ENCODE measurements at regions of chr4 and their contacts with region 1.

Region 1: GRCh38 chr4:139177868-139178611 is 1.0 kb upstream of the ELF2 start:
- DNase-seq: peak; percentile 95
- H3K4me3 Mint-ChIP-seq: peak overlapping the region; percentile 78
- H3K27ac Mint-ChIP-seq: peak overlapping the region; percentile 85
- H3K4me1 Mint-ChIP-seq: peaks cover 21% of the 10 kb centered on the region
- H3K27me3 Mint-ChIP-seq: peaks cover 26% of the 10 kb centered on the region

Region 2: DNA sequence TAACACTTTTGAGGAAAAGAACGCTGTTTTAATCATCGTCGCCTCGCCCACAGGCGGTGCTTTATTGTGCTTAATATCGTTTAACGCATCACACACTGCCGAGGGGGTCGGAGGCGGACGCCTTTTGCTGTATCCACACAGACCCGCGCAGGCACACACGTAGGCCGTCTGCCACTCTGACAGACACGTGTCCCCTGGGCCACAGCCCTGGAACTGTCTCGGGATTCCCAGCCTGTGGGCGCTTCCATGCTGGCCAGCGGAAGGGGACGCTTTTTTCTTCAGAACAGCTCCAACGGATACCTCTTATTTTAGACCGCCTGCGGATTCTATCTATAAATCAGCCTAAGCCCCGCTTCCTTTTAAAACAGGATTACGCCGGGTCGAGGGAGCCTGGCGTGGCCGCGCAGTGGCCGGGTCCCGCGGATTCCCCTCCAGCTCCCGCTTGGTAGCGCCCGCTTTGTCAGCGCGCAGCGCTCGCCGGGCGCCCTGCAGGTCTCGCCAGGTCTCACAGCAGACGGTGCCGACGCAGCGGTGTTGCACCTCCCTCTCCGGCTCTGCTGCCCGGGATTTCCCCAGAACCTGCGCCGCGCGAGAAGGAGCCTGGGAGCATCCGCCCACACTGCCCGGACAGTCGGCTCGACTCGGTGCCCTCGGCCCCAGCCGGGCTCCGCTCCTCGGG is 162.6 kb before region 1 on chr4 and contains the start of gene NOCT:
- CTCF ChIA-PET with region 1: interaction called, 7 read pairs
- POLR2A ChIA-PET with region 1: interaction called, 10 read pairs
- DNase-seq: peak; percentile 91
- H3K4me3 Mint-ChIP-seq: peak within 1 kb of the TSS; percentile 87
- H3K27ac Mint-ChIP-seq: peak within 1 kb of the TSS; percentile 87
- H3K4me1 Mint-ChIP-seq: peaks cover 33% of the 10 kb centered on the region
- H3K27me3 Mint-ChIP-seq: no peaks in the 10 kb centered on the region
- total RNA-seq, gene NOCT: 4.5 to 5.4 TPM

Region 3: DNA sequence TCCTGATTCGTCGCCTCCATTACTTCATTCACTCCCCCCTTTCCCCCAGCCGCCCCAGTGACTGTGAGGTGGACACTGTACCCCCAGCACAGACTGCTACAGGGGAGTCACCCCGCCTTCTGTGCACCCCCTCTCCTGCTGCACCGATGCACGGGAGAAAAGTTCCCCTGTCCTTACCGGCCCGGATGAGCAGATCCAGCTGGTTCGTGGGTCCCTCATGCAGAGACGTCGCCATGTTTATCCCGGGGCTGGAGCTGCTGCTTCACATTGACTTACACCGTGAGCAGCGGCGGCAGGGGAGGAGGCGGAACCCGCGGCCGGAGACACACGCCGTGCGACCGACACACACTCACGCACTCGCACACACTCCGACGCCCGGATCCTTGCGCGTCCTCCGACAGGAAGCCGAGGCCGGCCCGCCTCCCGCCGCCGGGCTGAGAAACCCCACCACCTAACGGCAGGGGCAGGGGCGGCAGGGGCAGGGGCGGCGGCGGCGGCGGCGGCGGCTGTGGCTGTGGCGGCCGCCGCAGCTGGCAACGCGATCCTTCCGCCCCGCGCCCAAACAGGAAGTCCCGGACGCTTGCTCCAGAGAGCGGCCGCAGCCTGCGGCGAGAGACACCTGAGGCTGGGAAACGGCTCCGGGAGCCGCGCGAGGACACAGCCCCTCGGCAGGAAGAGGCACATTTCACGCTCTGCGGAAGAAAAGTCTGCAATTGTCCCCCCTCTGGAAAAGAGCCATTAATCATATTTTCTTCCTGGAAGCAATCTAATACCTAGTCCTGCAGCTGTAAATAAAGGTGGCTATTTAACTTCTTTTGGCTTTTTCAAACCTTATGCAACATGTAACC is 93.9 kb before region 1 on chr4:
- CTCF ChIA-PET with region 1: interaction called, 3 read pairs
- POLR2A ChIA-PET with region 1: interaction called, 67 read pairs
- DNase-seq: peak; percentile 86
- H3K4me3 Mint-ChIP-seq: peak overlapping the region; percentile 80
- H3K27ac Mint-ChIP-seq: peak overlapping the region; percentile 98
- H3K4me1 Mint-ChIP-seq: peaks cover 39% of the 10 kb centered on the region
- H3K27me3 Mint-ChIP-seq: no peaks in the 10 kb centered on the region

Region 4: DNA sequence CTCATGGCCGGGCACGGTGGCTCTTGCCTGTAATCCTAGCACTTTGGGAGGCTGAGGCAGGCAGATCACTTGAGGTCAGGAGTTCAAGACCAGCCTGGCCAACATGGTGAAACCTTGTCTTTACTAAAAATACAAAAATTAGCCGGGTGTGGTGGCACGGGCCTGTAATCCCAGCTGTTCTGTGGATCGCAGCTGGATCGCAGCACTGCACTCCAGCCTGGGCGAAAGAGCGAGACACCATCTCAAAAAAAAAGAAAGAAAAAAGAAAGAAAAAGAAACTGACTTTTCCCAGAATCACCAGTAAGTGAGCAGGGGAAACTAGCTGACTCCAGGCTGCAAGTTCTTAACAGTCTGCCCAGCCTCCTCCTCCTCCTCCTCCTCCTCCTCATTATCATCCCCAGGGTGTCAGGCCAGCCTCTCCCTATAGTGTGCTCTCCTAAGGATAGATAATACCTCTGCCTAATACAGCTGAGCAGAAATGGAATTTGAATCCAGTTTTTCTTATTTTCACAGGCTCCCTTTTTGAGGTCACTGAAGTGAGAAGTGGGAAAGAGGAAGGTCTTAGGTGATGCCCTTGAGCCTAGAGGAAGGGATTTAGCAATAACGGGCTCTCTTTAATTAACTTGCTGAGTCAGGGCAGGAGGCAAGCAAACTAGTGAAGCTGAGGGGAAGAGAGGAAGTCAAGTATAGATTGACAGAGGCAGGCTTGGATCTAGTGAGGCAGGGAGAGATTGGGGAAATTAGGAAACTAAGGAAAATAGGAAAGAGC is 10.8 kb after region 1 on chr4:
- CTCF ChIA-PET with region 1: interaction called, 3 read pairs
- POLR2A ChIA-PET with region 1: interaction called, 12 read pairs
- DNase-seq: no peak
- H3K4me3 Mint-ChIP-seq: no peak overlapping the region
- H3K27ac Mint-ChIP-seq: no peak overlapping the region
- H3K4me1 Mint-ChIP-seq: peaks cover 6% of the 10 kb centered on the region
- H3K27me3 Mint-ChIP-seq: peaks cover 6% of the 10 kb centered on the region

Region 5: GRCh38 chr4:139530833-139531427 is 352.9 kb after region 1 on chr4:
- CTCF ChIA-PET with region 1: no interaction called
- POLR2A ChIA-PET with region 1: no interaction called
- DNase-seq: peak; percentile 57
- H3K4me3 Mint-ChIP-seq: no peak overlapping the region
- H3K27ac Mint-ChIP-seq: no peak overlapping the region
- H3K4me1 Mint-ChIP-seq: peaks cover 15% of the 10 kb centered on the region
- H3K27me3 Mint-ChIP-seq: no peaks in the 10 kb centered on the region